ENCODE measurements at regions of chr1 and their contacts with region 1.

Region 1: GRCh38 chr1:116847688-116848531 is 61.8 kb upstream of the PTGFRN start:
- DNase-seq: no peak
- H3K4me3 Mint-ChIP-seq: no peak overlapping the region
- H3K27ac Mint-ChIP-seq: peak overlapping the region; percentile 38
- H3K4me1 Mint-ChIP-seq: peaks cover 34% of the 10 kb centered on the region
- H3K27me3 Mint-ChIP-seq: no peaks in the 10 kb centered on the region

Region 2: GRCh38 chr1:116763787-116764465 is 84.0 kb before region 1 on chr1:
- intact Hi-C with region 1: loop called (anchors 1 kb)
- DNase-seq: peak; percentile 50
- H3K4me3 Mint-ChIP-seq: peak overlapping the region; percentile 84
- H3K27ac Mint-ChIP-seq: peak overlapping the region; percentile 100
- H3K4me1 Mint-ChIP-seq: peaks cover 95% of the 10 kb centered on the region
- H3K27me3 Mint-ChIP-seq: peaks cover 3% of the 10 kb centered on the region

Region 3: GRCh38 chr1:116873680-116874271 is 25.9 kb after region 1 on chr1:
- intact Hi-C with region 1: loop called (anchors 1 kb)
- DNase-seq: no peak
- H3K4me3 Mint-ChIP-seq: peak overlapping the region; percentile 3
- H3K27ac Mint-ChIP-seq: peak overlapping the region; percentile 13
- H3K4me1 Mint-ChIP-seq: peaks cover 19% of the 10 kb centered on the region
- H3K27me3 Mint-ChIP-seq: no peaks in the 10 kb centered on the region